Sigmoid colon (tissue), 7 donors: ENCODE measurements at regions of chr10 and their contacts with region 1.

Region 1: DNA sequence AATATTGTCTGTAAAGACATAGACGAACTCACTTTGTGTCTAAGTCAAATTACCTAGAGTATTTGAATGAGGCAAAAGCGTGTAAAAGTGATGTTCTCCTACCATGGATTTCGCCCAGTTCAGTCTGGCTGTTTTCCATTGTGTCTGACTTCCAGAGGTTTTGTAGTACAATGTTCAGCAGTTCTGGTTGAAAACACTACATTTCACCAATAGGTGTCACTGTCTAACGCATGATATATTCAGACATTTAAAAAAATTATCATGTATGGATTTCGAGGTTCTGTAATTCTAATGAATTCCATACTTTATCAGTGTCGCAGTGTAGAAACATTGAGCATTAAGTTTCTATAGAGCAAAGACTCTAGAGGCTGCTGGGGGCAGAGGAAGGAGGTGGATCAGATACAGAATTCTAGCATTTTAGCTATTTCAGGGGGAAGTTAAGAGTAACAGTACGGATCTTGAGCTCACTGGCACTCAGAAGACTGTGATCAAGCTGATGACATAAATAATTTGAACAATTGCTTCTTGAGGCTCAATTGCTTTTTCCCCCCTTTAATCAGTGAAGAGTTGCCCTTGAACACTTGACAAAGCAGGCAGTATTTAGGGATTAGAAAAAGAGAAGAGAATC is 196.9 kb upstream of the RHOBTB1 start:
- DNase-seq: peak; percentile 67
- H3K4me3 ChIP-seq: no peak overlapping the region
- H3K27ac ChIP-seq: no peak overlapping the region
- H3K4me1 ChIP-seq: peaks cover 0 to 3% (median 0%) of the 10 kb centered on the region in 4 donors
- H3K27me3 ChIP-seq: no peaks in the 10 kb centered on the region
- CTCF ChIP-seq: peak; percentile 5 to 64 (median 38)
- EP300 ChIP-seq: no peak
- POLR2A ChIP-seq: no peak

Region 2: DNA sequence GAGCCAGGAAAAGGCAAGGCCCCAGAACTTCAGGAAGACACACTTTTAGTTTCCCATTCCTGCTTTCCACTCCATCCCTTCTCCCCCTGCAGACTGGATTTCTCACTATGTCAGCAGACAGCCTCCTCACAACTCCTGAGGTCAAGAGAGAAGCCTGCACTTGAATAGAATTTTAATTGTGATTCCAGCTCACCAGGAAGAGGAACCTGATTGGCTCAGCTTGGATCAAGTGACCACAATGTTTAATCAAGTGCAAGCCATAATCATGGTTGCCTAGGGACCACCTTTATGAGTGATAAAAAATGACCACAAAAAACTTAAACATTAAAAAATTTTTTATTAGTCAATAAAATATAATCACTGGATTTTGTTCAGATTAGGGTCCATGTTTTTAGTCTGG is 47.8 kb after region 1 on chr10:
- intact Hi-C with region 1: no loop called
- DNase-seq: no peak
- H3K4me3 ChIP-seq: no peak overlapping the region
- H3K27ac ChIP-seq: no peak overlapping the region
- H3K4me1 ChIP-seq: no peaks in the 10 kb centered on the region
- H3K27me3 ChIP-seq: no peaks in the 10 kb centered on the region
- CTCF ChIP-seq: no peak
- EP300 ChIP-seq: no peak
- POLR2A ChIP-seq: no peak

Region 3: GRCh38 chr10:61733358-61733940 is 592.6 kb after region 1 on chr10:
- intact Hi-C with region 1: loop called (anchors 10 kb)
- DNase-seq: no peak
- H3K4me3 ChIP-seq: no peak overlapping the region
- H3K27ac ChIP-seq: no peak overlapping the region
- H3K4me1 ChIP-seq: peaks cover 0 to 14% (median 9%) of the 10 kb centered on the region in 4 donors
- H3K27me3 ChIP-seq: no peaks in the 10 kb centered on the region
- CTCF ChIP-seq: peak in 2 of 4 experiments; percentile 27 to 47
- EP300 ChIP-seq: no peak
- POLR2A ChIP-seq: no peak